H1 (cell line): ENCODE measurements at regions of chr18 and their contacts with region 1.

Region 1: GRCh38 chr18:32289483-32290075 is 99.7 kb downstream of the MEP1B start:
- DNase-seq: peak in 1 of 2 experiments; percentile 68
- H3K4me3 ChIP-seq: no peak overlapping the region
- H3K27ac ChIP-seq: no peak overlapping the region
- H3K4me1 ChIP-seq: no peaks in the 10 kb centered on the region; a peak in 1 of 7 replicates
- H3K27me3 ChIP-seq: no peaks in the 10 kb centered on the region
- CTCF ChIP-seq: peak; percentile 31 to 75 (median 72)
- EP300 ChIP-seq: no peak
- POLR2A ChIP-seq: no peak
- RAD21 ChIP-seq: peak; percentile 66 to 79

Region 2: DNA sequence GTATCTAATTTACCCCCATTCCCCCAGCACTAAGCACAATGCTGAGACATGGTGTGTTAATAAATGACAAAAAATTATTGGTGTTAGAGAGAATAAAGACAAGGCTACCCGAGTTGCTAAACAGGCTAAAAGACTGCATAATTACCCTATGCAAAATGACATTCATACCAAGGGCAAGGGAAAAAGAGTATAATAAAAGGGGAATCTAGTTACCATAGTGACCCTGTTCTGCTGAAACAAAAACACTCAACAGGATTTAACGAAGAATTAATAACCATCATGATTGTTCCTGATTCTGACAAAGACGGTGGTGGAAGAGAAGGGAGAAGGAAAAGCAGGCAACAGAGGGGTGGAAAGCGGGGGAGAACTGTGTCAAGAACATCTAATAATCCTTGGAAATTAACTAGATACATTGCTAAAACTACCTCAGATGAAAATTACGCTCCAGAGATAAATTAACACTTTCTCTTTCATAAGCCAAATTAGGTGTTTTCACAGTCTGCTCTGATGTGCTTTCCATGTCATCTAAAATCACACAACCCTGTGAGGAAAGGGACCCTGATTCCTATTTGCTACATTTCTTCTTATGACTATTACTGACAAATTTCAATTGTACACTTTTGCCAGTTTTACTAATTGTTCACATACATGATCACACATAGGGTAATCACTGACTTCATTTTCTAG is 672.4 kb before region 1 on chr18:
- CTCF ChIA-PET with region 1: no interaction called
- POLR2A ChIA-PET with region 1: no interaction called
- DNase-seq: no peak
- H3K4me3 ChIP-seq: no peak overlapping the region
- H3K27ac ChIP-seq: no peak overlapping the region
- H3K4me1 ChIP-seq: peaks cover 0 to 3% (median 1%) of the 10 kb centered on the region in 4 experiments; a peak in 2 of 7 replicates
- H3K27me3 ChIP-seq: no peaks in the 10 kb centered on the region
- CTCF ChIP-seq: no peak
- EP300 ChIP-seq: no peak
- POLR2A ChIP-seq: no peak
- RAD21 ChIP-seq: no peak

Region 3: DNA sequence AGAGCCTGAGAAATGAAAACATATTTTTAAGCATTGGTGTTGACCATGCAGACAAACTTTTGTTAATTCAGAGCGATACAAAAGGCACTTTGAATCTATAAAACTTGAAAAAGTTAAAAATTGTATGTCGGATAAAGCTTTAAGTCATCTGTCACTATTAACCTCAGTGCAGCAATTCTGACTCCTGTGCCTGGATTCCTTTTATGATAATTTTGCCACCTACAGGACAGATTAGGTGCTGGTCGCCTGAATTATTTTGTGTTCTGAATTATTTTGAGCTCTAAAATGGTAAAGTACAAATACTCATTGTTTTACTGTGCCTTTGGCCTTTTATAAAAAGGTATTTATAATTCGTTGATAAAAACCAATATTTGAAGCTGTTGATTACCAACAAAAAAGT is 217.3 kb before region 1 on chr18:
- CTCF ChIA-PET with region 1: no interaction called
- POLR2A ChIA-PET with region 1: no interaction called
- DNase-seq: no peak
- H3K4me3 ChIP-seq: no peak overlapping the region
- H3K27ac ChIP-seq: no peak overlapping the region
- H3K4me1 ChIP-seq: no peaks in the 10 kb centered on the region
- H3K27me3 ChIP-seq: no peaks in the 10 kb centered on the region
- CTCF ChIP-seq: no peak; a peak in 1 of 4 replicates
- EP300 ChIP-seq: no peak
- POLR2A ChIP-seq: no peak
- RAD21 ChIP-seq: peak in 1 of 2 experiments; percentile 20; a peak in 1 of 4 replicates

Region 4: GRCh38 chr18:32278177-32278799 is 11.3 kb before region 1 on chr18:
- CTCF ChIA-PET with region 1: interaction called, 56 read pairs
- POLR2A ChIA-PET with region 1: no interaction called
- DNase-seq: no peak
- H3K4me3 ChIP-seq: no peak overlapping the region
- H3K27ac ChIP-seq: no peak overlapping the region
- H3K4me1 ChIP-seq: 0 out of 7 replicates have a peak, but pooled peaks cover 0 to 4% (median 0%) of the 10 kb centered on the region in 4 experiments
- H3K27me3 ChIP-seq: no peaks in the 10 kb centered on the region
- CTCF ChIP-seq: no peak
- EP300 ChIP-seq: no peak
- POLR2A ChIP-seq: no peak
- RAD21 ChIP-seq: no peak

Region 5: GRCh38 chr18:32301976-32302743 is 12.6 kb after region 1 on chr18:
- CTCF ChIA-PET with region 1: interaction called, 12 read pairs
- POLR2A ChIA-PET with region 1: no interaction called
- DNase-seq: no peak
- H3K4me3 ChIP-seq: no peak overlapping the region
- H3K27ac ChIP-seq: no peak overlapping the region
- H3K4me1 ChIP-seq: no peaks in the 10 kb centered on the region
- H3K27me3 ChIP-seq: no peaks in the 10 kb centered on the region
- CTCF ChIP-seq: no peak
- EP300 ChIP-seq: no peak
- POLR2A ChIP-seq: no peak
- RAD21 ChIP-seq: no peak